ENCODE measurements at regions of chr10 and their contacts with region 1.

Region 1: GRCh38 chr10:119409866-119410299 is 132.6 kb downstream of the RGS10 start:
- DNase-seq: peak; percentile 75
- ATAC-seq: peak; percentile 80
- H3K4me3 ChIP-seq: peak overlapping the region in 2 of 3 experiments; percentile 28 to 51; a peak in 3 of 6 replicates
- H3K27ac ChIP-seq: peak overlapping the region; percentile 85
- H3K4me1 ChIP-seq: peaks cover 61% of the 10 kb centered on the region
- H3K27me3 ChIP-seq: no peaks in the 10 kb centered on the region; a peak in 1 of 5 replicates
- CTCF ChIP-seq: no peak
- EP300 ChIP-seq: peak; percentile 39 to 73; a peak in 3 of 4 replicates
- POLR2A ChIP-seq: peak in 1 of 2 experiments; percentile 55; a peak in 2 of 4 replicates
- RAD21 ChIP-seq: no peak

Region 2: DNA sequence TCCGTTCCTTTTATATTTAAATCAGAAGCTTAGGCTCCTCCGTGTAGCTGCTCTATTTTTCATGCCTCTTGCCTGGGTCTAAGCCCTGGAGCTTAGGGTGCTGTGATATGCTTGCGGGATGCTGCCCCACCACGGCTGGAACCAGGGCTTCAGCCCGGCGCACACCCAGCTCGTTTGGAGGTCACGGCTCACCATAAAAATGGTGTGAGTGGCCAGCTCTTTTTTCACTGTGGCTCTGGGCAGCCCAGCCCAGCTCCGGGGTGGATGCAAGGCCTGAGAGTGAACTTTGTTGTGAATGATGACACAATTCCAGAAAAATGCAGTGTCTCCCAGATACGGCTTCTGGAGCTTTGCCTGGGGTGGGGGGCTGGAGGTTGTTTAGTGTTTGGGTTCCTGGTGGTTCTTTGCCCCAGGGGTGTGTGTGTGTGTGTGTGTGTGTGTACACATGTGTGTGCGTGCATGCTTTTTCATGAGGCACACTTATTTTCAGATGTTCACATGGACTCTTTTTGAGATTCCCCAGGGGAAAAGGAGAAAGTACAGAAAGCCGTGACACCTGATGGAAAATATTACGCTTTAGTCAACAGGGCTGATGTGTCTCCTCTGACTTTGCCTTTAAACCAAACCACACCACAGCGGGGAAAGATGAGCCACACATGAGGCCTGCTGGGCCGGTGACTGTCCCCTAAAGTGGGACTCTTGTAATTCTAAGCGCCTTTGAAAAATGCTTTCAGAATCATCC is 156.3 kb before region 1 on chr10:
- CTCF ChIA-PET with region 1: no interaction called
- POLR2A ChIA-PET with region 1: interaction called, 20 read pairs
- in situ Hi-C with region 1: no loop called
- intact Hi-C with region 1: no loop called
- DNase-seq: peak; percentile 92
- ATAC-seq: peak; percentile 86
- H3K4me3 ChIP-seq: peak overlapping the region; percentile 39 to 70 (median 51); a peak in 5 of 6 replicates
- H3K27ac ChIP-seq: peak overlapping the region; percentile 90
- H3K4me1 ChIP-seq: peaks cover 74% of the 10 kb centered on the region
- H3K27me3 ChIP-seq: no peaks in the 10 kb centered on the region
- CTCF ChIP-seq: peak; percentile 33
- EP300 ChIP-seq: no peak; a peak in 1 of 4 replicates
- POLR2A ChIP-seq: no peak; a peak in 1 of 4 replicates
- RAD21 ChIP-seq: peak; percentile 41; the same call in 1 of the 2 replicates

Region 3: DNA sequence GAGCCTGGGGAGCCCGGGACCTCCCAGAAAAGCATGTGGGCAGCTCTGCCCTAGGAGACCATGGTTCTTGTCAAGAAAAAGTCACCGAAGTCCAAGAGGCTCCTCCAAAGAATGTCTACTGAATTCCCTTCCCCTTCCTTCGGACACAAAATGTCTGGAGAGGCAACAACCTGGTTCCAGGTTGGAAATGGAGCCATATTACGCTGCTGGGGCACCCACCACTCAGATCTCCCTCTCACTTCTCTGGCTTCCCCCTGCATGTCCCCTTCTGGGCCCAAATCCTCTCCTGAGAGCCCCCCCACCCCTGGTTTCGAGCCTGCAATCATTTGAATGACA is 80.1 kb after region 1 on chr10:
- CTCF ChIA-PET with region 1: no interaction called
- POLR2A ChIA-PET with region 1: no interaction called
- in situ Hi-C with region 1: no loop called
- intact Hi-C with region 1: loop called (anchors 2 kb)
- DNase-seq: no peak
- ATAC-seq: peak; percentile 15; the same call in 2 of the 3 replicates
- H3K4me3 ChIP-seq: peak overlapping the region in 1 of 3 experiments; percentile 64; a peak in 2 of 6 replicates
- H3K27ac ChIP-seq: no peak overlapping the region
- H3K4me1 ChIP-seq: peaks cover 23% of the 10 kb centered on the region
- H3K27me3 ChIP-seq: peaks cover 0 to 14% of the 10 kb centered on the region in 2 experiments; a peak in 1 of 5 replicates
- CTCF ChIP-seq: no peak
- EP300 ChIP-seq: no peak
- POLR2A ChIP-seq: no peak
- RAD21 ChIP-seq: no peak